Heart left ventricle (tissue), 16 donors: ENCODE measurements at regions of chr4 and their contacts with region 1.

Region 1: GRCh38 chr4:169485791-169486742 is 126.3 kb downstream of the NEK1 start:
- DNase-seq: no peak
- ATAC-seq: peak in 2 of 4 donors; percentile 53 to 63
- H3K4me3 ChIP-seq: peak overlapping the region in 1 of 12 donors; percentile 8
- H3K27ac ChIP-seq: no peak overlapping the region
- H3K4me1 ChIP-seq: peaks cover 0 to 5% (median 0%) of the 10 kb centered on the region in 12 donors
- H3K27me3 ChIP-seq: no peaks in the 10 kb centered on the region
- CTCF ChIP-seq: peak; percentile 18 to 72 (median 58)
- POLR2A ChIP-seq: no peak

Region 2: DNA sequence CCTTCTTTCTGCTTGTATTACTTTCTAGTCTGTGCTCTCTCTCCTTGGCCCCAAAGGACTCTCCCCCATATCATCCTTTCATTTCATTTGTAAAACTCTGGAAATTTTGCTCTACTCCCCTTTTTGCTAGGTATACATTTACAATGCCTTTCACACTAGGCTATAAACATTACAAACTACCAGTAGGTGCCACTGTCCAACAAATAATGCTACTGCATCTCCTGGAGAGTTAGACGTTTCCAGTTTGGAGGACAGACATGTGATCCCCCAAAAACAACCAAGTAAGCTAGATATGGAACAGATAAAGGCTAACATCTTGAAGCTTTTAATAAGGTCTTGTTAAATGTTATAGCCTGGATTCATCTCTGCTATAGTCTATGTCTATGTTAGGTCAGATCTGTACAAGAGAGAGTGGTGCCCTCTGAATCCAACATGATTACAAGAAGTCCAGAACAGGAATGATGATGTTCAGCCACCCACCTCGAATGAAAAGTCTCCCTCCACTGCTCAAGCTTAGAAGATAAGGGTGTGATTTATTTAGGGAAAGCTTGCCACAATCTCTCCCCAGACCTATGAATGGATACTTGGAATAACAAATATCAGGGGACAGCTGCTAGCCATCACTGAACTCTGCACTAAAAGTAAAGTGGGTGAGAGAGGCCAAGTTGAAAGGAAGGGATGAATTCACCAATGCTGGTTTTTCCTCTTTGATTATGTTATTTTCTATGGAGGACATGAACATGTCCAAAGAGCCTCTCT is 490.4 kb before region 1 on chr4:
- intact Hi-C with region 1: loop called in 3 of 10 experiments (anchors 5 to 10 kb)
- DNase-seq: no peak
- ATAC-seq: peak; percentile 54 to 78 (median 72)
- H3K4me3 ChIP-seq: no peak overlapping the region
- H3K27ac ChIP-seq: no peak overlapping the region
- H3K4me1 ChIP-seq: peaks cover 0 to 32% (median 10%) of the 10 kb centered on the region in 12 donors
- H3K27me3 ChIP-seq: no peaks in the 10 kb centered on the region
- CTCF ChIP-seq: peak in 8 of 12 donors; percentile 19 to 52 (median 38)
- POLR2A ChIP-seq: no peak

Region 3: GRCh38 chr4:169311643-169312365 is 174.3 kb before region 1 on chr4:
- intact Hi-C with region 1: loop called in 1 of 10 experiments (anchors 10 kb)
- DNase-seq: peak in 2 of 5 donors; percentile 32 to 40
- ATAC-seq: peak; percentile 39 to 87 (median 84)
- H3K4me3 ChIP-seq: no peak overlapping the region
- H3K27ac ChIP-seq: no peak overlapping the region
- H3K4me1 ChIP-seq: peaks cover 6 to 25% (median 19%) of the 10 kb centered on the region in 12 donors
- H3K27me3 ChIP-seq: no peaks in the 10 kb centered on the region
- CTCF ChIP-seq: peak; percentile 47 to 76 (median 58)
- POLR2A ChIP-seq: no peak

Region 4: DNA sequence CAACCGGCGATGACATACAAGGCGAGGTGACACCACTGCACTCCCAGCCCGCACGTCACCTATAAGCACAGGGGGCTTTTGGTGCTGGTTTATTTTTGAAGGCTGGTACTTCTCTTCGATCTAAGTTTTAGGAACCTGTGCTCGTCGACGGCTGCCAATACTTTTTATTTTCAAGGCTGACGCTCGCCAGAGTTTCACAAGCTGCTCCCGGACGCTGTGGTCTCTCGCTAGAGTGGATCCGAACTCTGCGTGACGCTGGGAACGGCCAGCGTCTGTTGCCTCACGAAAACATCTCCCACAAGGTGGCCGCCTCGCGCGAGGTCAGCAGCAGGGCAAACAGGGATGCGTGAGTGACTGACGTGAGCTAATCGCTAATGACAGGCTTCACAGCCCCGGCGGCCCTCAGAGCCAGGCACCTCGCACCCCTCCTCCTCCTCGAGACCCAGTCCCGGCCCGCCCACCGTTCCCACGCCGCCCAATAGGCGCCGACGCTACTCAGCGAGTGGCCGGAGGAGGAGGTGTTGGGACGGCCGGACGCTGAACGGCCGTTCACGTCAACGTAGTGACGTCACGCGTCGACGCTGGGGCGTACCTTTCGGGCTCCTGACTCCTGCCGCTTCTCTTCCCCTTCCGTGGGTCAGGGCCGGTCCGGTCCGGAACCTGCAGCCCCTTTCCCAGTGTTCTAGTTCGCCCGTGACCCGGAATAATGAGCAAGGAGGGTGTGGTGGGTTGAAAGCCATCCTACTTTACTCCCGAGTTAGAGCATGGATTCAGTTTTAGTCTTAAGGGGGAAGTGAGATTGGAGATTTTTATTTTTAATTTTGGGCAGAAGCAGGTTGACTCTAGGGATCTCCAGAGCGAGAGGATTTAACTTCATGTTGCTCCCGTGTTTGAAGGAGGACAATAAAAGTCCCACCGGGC is 134.2 kb after region 1 on chr4 and contains the start of gene CLCN3:
- intact Hi-C with region 1: no loop called
- DNase-seq: peak; percentile 98 to 99 (median 99)
- ATAC-seq: peak; percentile 99
- H3K4me3 ChIP-seq: peak within 1 kb of the TSS; percentile 55 to 84 (median 71)
- H3K27ac ChIP-seq: peak within 1 kb of the TSS; percentile 87 to 97 (median 94)
- H3K4me1 ChIP-seq: peaks cover 0 to 34% (median 22%) of the 10 kb centered on the region in 12 donors
- H3K27me3 ChIP-seq: no peaks in the 10 kb centered on the region
- CTCF ChIP-seq: peak in 6 of 12 donors; percentile 16 to 54 (median 38)
- POLR2A ChIP-seq: peak; percentile 8 to 92
- total RNA-seq, gene CLCN3: 46.4 to 86.2 (median 59.3) TPM